CD4-positive, alpha-beta T cell (primary cell): ENCODE measurements at regions of chr1 and their contacts with region 1.

Region 1: GRCh38 chr1:66446261-66447001 is 87.5 kb upstream of the SGIP1 start:
- DNase-seq: peak in 8 of 14 experiments; percentile 8 to 87 (median 34)
- ATAC-seq: peak; percentile 77
- H3K4me3 ChIP-seq: no peak overlapping the region
- H3K4me3 Mint-ChIP-seq: peak overlapping the region; percentile 39
- H3K27ac ChIP-seq: peak overlapping the region; percentile 63 to 83
- H3K27ac Mint-ChIP-seq: peak overlapping the region; percentile 86
- H3K4me1 ChIP-seq: peaks cover 16% of the 10 kb centered on the region
- H3K4me1 Mint-ChIP-seq: peaks cover 24% of the 10 kb centered on the region
- H3K27me3 ChIP-seq: no peaks in the 10 kb centered on the region
- H3K27me3 Mint-ChIP-seq: no peaks in the 10 kb centered on the region
- CTCF ChIP-seq: peak; percentile 90

Region 2: DNA sequence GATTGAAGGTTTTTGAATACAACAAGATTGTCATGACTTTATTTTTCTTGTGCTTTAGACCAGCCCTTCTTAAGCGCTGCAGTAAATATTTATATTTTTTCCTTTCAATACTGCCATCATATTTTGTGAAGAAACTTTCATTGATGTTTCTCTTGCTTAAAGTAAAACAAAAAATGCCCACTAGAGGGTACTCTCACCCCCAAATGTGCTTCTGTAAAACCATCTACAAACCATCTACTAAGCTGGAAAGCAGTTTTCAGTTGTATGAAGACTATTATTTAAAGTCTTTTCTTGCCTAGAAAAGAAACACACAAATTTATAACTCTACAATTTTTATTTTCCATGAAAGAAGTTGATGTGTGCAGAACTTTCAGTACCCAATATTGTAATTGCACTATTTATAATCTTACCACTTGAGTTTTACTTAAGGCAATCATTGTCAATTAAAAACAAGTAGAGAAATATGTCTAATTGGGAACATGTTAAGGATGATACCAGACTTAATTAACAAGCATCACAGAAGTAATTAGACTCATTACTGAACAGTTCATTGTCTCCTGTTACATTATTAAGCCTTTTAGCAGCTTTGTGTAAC is 1015.2 kb before region 1 on chr1:
- CTCF ChIA-PET with region 1: interaction called, 3 read pairs
- POLR2A ChIA-PET with region 1: no interaction called
- intact Hi-C with region 1: loop called (anchors 5 kb)
- DNase-seq: peak in 3 of 14 experiments; percentile 34 to 50 (median 44)
- ATAC-seq: peak; percentile 62
- H3K4me3 ChIP-seq: no peak overlapping the region
- H3K4me3 Mint-ChIP-seq: no peak overlapping the region
- H3K27ac ChIP-seq: no peak overlapping the region
- H3K27ac Mint-ChIP-seq: no peak overlapping the region
- H3K4me1 ChIP-seq: no peaks in the 10 kb centered on the region
- H3K4me1 Mint-ChIP-seq: peaks cover 11% of the 10 kb centered on the region
- H3K27me3 ChIP-seq: no peaks in the 10 kb centered on the region
- H3K27me3 Mint-ChIP-seq: no peaks in the 10 kb centered on the region
- CTCF ChIP-seq: peak; percentile 83

Region 3: DNA sequence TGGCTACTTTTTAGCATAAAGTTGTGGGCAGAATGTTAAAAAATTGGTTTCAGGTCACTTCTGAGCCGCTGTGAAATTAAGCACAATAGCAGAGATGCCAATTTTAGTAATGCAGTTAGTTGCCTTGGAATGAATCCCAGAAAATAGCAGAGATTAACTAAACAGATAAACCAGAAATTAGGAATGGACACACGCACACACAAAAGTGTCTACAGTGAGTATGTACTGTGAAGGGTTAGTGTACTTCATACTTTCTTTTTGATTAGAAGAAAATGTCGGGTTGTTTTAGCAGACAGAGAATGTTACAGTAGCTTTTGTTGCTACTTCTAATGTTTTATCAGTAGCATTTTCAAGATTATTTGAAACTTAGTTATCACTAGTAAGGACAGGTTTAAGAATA is 919.2 kb before region 1 on chr1:
- CTCF ChIA-PET with region 1: no interaction called
- POLR2A ChIA-PET with region 1: no interaction called
- intact Hi-C with region 1: no loop called
- DNase-seq: no peak
- ATAC-seq: no peak
- H3K4me3 ChIP-seq: no peak overlapping the region
- H3K4me3 Mint-ChIP-seq: no peak overlapping the region
- H3K27ac ChIP-seq: no peak overlapping the region
- H3K27ac Mint-ChIP-seq: no peak overlapping the region
- H3K4me1 ChIP-seq: no peaks in the 10 kb centered on the region
- H3K4me1 Mint-ChIP-seq: peaks cover 11% of the 10 kb centered on the region
- H3K27me3 ChIP-seq: peaks cover 12 to 32% of the 10 kb centered on the region in 2 experiments
- H3K27me3 Mint-ChIP-seq: peaks cover 61% of the 10 kb centered on the region
- CTCF ChIP-seq: no peak

Region 4: DNA sequence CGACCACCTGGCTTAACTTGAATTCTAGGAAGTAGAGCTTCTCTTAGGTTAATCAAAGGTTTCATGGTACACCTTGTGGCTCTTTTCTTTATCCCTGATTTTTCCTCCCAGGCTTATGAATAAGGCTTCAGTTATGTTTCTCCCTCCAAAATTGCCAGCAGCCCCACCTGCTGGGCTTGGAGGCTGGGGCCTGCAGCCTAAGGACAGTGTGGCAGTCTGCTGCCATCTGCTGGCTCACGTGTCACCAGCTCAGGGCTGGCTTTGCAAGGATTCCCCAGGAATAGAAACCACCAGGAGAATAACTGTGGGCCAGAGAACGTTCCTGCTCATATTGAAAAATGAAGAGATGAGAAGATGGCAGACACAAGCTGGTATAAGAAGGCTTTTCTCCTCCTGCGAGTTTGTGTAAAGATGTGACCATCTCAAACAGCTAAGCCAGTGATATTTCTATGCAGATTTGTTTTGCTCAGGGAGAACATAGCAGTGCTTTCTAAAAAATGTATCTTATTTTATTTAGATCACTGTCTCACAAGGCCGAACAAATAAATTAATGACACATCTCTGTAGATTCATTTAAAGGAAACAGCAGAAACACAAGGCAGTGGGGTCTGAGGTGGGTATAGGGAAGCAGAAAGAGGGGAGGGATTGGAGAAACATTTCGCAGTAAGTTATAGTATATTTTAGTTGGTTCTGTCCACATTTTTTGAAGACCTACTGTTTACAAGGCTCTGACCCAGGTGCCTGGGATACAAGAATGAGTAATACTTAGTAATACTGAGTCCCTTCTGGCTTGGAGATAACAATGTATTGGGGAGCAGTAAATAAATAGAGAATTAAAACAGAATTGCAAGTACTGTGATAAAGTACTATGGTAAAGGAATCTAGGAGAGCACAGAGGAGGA is 203.5 kb before region 1 on chr1:
- CTCF ChIA-PET with region 1: interaction called, 172 read pairs
- POLR2A ChIA-PET with region 1: interaction called, 26 read pairs
- intact Hi-C with region 1: no loop called
- DNase-seq: peak; percentile 55 to 88 (median 68)
- ATAC-seq: peak; percentile 83
- H3K4me3 ChIP-seq: no peak overlapping the region
- H3K4me3 Mint-ChIP-seq: no peak overlapping the region
- H3K27ac ChIP-seq: no peak overlapping the region
- H3K27ac Mint-ChIP-seq: no peak overlapping the region
- H3K4me1 ChIP-seq: peaks cover 37% of the 10 kb centered on the region
- H3K4me1 Mint-ChIP-seq: peaks cover 10% of the 10 kb centered on the region
- H3K27me3 ChIP-seq: no peaks in the 10 kb centered on the region
- H3K27me3 Mint-ChIP-seq: peaks cover 7% of the 10 kb centered on the region
- CTCF ChIP-seq: peak; percentile 99

Region 5: DNA sequence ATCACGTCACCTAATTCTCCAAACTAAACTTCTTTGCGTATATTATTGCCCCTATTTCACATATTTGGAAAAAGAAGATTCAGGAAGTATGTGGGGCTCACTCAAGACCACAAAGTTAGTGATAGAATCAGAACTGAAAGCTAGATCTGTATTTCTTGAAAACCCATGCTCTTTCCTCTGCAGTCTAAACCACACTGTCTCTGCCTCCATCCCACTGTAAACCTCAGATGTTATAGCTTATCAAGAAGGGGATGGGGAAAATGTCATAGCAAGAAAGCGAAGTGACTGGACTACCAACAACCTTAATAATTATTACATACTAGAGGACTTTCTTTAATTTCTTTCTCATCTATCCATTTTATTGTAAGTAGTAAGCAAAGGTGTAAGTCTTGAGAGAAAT is 170.2 kb before region 1 on chr1:
- CTCF ChIA-PET with region 1: interaction called, 13 read pairs
- POLR2A ChIA-PET with region 1: interaction called, 16 read pairs
- intact Hi-C with region 1: no loop called
- DNase-seq: peak in 3 of 14 experiments; percentile 54 to 80 (median 64)
- ATAC-seq: peak; percentile 51
- H3K4me3 ChIP-seq: peak overlapping the region; percentile 17
- H3K4me3 Mint-ChIP-seq: peak overlapping the region; percentile 81
- H3K27ac ChIP-seq: peak overlapping the region; percentile 44 to 47
- H3K27ac Mint-ChIP-seq: peak overlapping the region; percentile 78
- H3K4me1 ChIP-seq: peaks cover 70% of the 10 kb centered on the region
- H3K4me1 Mint-ChIP-seq: peaks cover 91% of the 10 kb centered on the region
- H3K27me3 ChIP-seq: no peaks in the 10 kb centered on the region
- H3K27me3 Mint-ChIP-seq: no peaks in the 10 kb centered on the region
- CTCF ChIP-seq: no peak

Region 6: DNA sequence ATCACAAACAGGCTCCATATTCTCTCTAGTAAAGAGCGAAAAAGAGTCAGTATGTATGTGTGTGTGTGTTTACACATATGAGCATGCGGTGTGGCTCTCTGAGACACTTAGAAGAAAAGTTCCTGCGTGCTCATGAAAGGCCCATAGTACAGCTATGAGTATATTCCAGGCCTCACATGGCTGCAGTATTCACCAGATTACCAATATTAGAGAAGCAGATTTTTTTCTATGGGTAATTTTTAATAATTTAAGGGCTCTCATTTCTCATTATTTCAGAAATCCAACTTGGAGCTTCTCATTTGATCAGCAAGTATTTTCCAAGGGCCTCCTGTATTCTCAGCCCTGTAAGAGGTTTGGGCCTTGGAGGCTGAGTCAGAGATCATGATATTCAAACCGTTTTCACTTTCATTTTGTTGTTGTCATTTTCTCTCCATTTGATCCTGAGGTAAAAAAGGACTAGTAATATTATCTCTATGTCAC is 145.4 kb before region 1 on chr1:
- CTCF ChIA-PET with region 1: interaction called, 20 read pairs
- POLR2A ChIA-PET with region 1: no interaction called
- intact Hi-C with region 1: no loop called
- DNase-seq: peak in 7 of 14 experiments; percentile 9 to 78 (median 42)
- ATAC-seq: peak; percentile 87
- H3K4me3 ChIP-seq: peak overlapping the region; percentile 29
- H3K4me3 Mint-ChIP-seq: peak overlapping the region; percentile 68
- H3K27ac ChIP-seq: peak overlapping the region; percentile 33 to 61
- H3K27ac Mint-ChIP-seq: peak overlapping the region; percentile 84
- H3K4me1 ChIP-seq: peaks cover 31% of the 10 kb centered on the region
- H3K4me1 Mint-ChIP-seq: peaks cover 40% of the 10 kb centered on the region
- H3K27me3 ChIP-seq: no peaks in the 10 kb centered on the region
- H3K27me3 Mint-ChIP-seq: no peaks in the 10 kb centered on the region
- CTCF ChIP-seq: no peak

Region 7: GRCh38 chr1:66350001-66350547 is 96.4 kb before region 1 on chr1:
- CTCF ChIA-PET with region 1: interaction called, 9 read pairs
- POLR2A ChIA-PET with region 1: interaction called, 8 read pairs
- intact Hi-C with region 1: loop called in 1 of 2 experiments (anchors 5 kb)
- DNase-seq: peak in 11 of 14 experiments; percentile 36 to 88 (median 63)
- ATAC-seq: peak; percentile 72
- H3K4me3 ChIP-seq: peak overlapping the region; percentile 8
- H3K4me3 Mint-ChIP-seq: peak overlapping the region; percentile 84
- H3K27ac ChIP-seq: peak overlapping the region; percentile 65 to 77
- H3K27ac Mint-ChIP-seq: peak overlapping the region; percentile 87
- H3K4me1 ChIP-seq: peaks cover 52% of the 10 kb centered on the region
- H3K4me1 Mint-ChIP-seq: peaks cover 96% of the 10 kb centered on the region
- H3K27me3 ChIP-seq: no peaks in the 10 kb centered on the region
- H3K27me3 Mint-ChIP-seq: no peaks in the 10 kb centered on the region
- CTCF ChIP-seq: no peak

Region 8: GRCh38 chr1:66374561-66375111 is 71.8 kb before region 1 on chr1:
- CTCF ChIA-PET with region 1: interaction called, 12 read pairs
- POLR2A ChIA-PET with region 1: interaction called, 5 read pairs
- intact Hi-C with region 1: loop called (anchors 5 kb)
- DNase-seq: peak in 4 of 14 experiments; percentile 19 to 78 (median 74)
- ATAC-seq: peak; percentile 76
- H3K4me3 ChIP-seq: no peak overlapping the region
- H3K4me3 Mint-ChIP-seq: peak overlapping the region; percentile 75
- H3K27ac ChIP-seq: peak overlapping the region; percentile 54 to 57
- H3K27ac Mint-ChIP-seq: peak overlapping the region; percentile 93
- H3K4me1 ChIP-seq: peaks cover 59% of the 10 kb centered on the region
- H3K4me1 Mint-ChIP-seq: peaks cover 66% of the 10 kb centered on the region
- H3K27me3 ChIP-seq: no peaks in the 10 kb centered on the region
- H3K27me3 Mint-ChIP-seq: no peaks in the 10 kb centered on the region
- CTCF ChIP-seq: no peak

Region 9: DNA sequence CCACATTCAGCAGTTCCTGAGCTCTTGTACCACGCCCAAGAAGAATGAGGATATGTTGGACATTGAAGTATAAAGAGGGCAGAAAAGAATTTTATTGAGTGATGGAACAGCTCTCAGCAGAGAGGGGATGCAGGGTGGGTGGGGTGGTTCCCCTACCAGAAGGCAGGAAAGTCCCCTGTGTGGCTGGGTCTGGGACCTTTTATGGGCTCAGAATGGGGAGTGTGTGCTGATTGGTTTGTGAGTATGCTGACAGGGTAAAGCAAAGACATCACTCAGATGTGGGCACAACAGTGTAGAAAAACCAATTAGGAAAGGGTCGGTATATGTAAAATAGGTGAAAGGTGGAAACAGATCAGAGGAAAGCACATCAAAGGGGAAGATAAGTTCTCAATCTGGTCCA is 149.8 kb after region 1 on chr1:
- CTCF ChIA-PET with region 1: no interaction called
- POLR2A ChIA-PET with region 1: no interaction called
- intact Hi-C with region 1: no loop called
- DNase-seq: no peak
- ATAC-seq: no peak
- H3K4me3 ChIP-seq: no peak overlapping the region
- H3K4me3 Mint-ChIP-seq: no peak overlapping the region
- H3K27ac ChIP-seq: no peak overlapping the region
- H3K27ac Mint-ChIP-seq: no peak overlapping the region
- H3K4me1 ChIP-seq: no peaks in the 10 kb centered on the region
- H3K4me1 Mint-ChIP-seq: no peaks in the 10 kb centered on the region
- H3K27me3 ChIP-seq: peaks cover 0 to 2% of the 10 kb centered on the region in 2 experiments
- H3K27me3 Mint-ChIP-seq: peaks cover 28% of the 10 kb centered on the region
- CTCF ChIP-seq: no peak